Right ventricle myocardium inferior (tissue), 1 donor: ENCODE measurements at regions of chr7 and their contacts with region 1.

Region 1: GRCh38 chr7:73557108-73557396 is 438 bp downstream of the BCL7B start:
- DNase-seq: peak; percentile 97
- ATAC-seq: peak; percentile 98

Region 2: GRCh38 chr7:73522105-73522872 is 34.8 kb before region 1 on chr7 and contains the start of gene BAZ1B:
- intact Hi-C with region 1: loop called (anchors 1 kb)
- DNase-seq: peak; percentile 99
- ATAC-seq: peak; percentile 98
- total RNA-seq, gene BAZ1B: 40.9 TPM

Region 3: DNA sequence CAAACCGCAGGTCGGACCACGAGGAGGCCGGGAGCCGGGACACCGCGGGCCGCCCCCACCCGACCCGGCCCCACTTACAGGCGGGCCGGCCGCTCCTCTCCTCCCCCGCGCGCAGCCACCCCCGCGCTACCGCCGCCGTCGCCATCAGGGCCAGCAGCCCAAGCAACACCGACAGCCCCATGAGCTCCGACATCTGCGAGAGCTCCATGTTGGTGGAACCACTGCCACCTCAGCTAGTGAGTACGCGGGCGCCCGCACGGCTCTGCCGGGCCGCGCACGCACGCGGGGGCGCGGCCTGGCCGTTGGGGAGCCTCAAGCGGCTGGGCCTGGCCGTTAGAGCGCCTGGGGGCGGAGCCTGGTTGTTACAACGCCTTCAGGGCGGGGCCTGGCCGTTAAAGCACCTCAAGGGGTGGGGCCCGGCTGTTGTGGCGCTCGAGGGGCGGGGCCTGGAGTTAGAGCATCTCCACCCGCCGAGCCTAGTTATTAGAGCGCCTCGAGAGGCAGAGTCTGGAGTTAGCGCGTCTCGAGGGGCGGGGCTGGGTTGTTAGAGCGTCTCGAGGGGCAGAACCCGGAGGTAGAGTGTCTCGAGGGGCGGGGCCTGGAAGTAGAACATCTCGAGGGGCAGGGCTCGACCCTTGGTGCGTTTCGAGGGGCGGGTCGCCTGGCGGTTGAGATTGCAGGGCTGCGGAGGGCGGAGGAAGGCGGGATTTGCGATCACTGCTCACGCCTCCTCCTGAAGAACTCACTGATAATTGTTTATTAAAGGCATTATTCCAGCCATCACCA is 21.5 kb after region 1 on chr7 and contains the start of gene TBL2:
- intact Hi-C with region 1: loop called (anchors 2 kb)
- DNase-seq: peak; percentile 100
- ATAC-seq: peak; percentile 98
- total RNA-seq, gene TBL2: 10.4 TPM